Heart right ventricle (tissue), 16 donors: ENCODE measurements at regions of chr19 and their contacts with region 1.

Region 1: GRCh38 chr19:49157445-49158224 is at the start of gene TRPM4:
- DNase-seq: peak; percentile 96 to 97
- ATAC-seq: peak; percentile 81 to 86 (median 84)
- H3K4me3 ChIP-seq: peak within 1 kb of the TSS; percentile 75 to 98 (median 92)
- H3K27ac ChIP-seq: peak within 1 kb of the TSS; percentile 92 to 98 (median 96)
- H3K4me1 ChIP-seq: peaks cover 6 to 41% (median 24%) of the 10 kb centered on the region in 9 donors
- H3K27me3 ChIP-seq: peaks cover 0 to 16% (median 0%) of the 10 kb centered on the region in 7 donors
- CTCF ChIP-seq: peak in 1 of 9 donors; percentile 11
- total RNA-seq, gene TRPM4: 21.7 to 38.5 (median 33.0) TPM

Region 2: GRCh38 chr19:48637170-48637947 is 520.3 kb before region 1 on chr19 and contains the start of gene DBP:
- intact Hi-C with region 1: loop called in 1 of 10 experiments (anchors 5 kb)
- DNase-seq: peak; percentile 99 to 100
- ATAC-seq: peak; percentile 73 to 87 (median 82)
- H3K4me3 ChIP-seq: peak within 1 kb of the TSS; percentile 15 to 92 (median 75)
- H3K27ac ChIP-seq: peak within 1 kb of the TSS; percentile 90 to 98 (median 96)
- H3K4me1 ChIP-seq: peaks cover 19 to 56% (median 41%) of the 10 kb centered on the region in 9 donors
- H3K27me3 ChIP-seq: no peaks in the 10 kb centered on the region
- CTCF ChIP-seq: no peak
- total RNA-seq, gene DBP: 2.4 to 30.0 (median 12.8) TPM

Region 3: DNA sequence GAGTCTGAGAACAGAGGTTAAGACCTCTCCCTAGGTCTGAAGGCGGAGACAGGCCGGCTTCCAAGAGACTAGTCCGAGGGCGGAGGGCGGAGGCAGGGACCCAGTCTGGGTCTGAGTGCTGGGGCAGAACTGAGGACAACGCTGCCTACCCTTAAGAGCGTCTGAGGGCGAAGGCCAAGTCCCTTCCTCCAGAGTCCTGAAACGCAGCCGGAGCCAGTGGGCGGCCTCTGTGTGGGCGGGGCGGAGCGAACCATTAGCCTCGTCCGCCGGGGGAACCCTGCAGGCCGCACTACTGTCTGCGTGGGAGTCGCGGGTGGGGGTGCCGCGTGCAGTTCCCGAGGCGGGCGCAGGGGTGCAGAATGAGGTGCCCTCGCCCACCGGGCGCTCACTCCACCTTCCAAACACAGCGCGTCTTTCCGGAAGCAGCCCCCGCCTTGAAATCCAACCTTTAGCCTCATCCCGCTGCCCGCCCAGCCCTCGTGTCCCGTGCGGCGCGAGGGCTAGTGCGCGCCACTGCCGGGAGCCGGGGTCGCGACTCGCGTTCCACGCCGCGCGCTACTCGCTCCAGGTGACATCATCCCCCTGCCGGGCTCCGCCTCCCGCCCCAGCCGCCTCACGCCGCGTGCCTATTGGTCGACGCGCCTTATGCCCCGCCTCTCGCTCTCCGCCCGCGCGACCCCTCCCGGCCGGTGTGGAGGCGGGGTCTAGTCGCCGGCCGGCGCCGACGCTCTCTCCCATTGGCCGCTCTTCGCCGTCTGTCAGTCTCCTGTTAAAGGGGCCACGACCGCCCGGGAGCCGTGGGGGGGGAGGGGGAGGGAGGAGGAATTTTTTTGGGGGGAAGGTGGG is 38.8 kb before region 1 on chr19 and contains the start of gene C19orf73:
- intact Hi-C with region 1: loop called in 3 of 10 experiments (anchors 5 kb)
- DNase-seq: peak; percentile 94 to 97
- ATAC-seq: peak; percentile 89 to 95 (median 94)
- H3K4me3 ChIP-seq: peak within 1 kb of the TSS; percentile 41 to 85 (median 64)
- H3K27ac ChIP-seq: peak within 1 kb of the TSS; percentile 86 to 99 (median 97)
- H3K4me1 ChIP-seq: peaks cover 11 to 50% (median 35%) of the 10 kb centered on the region in 9 donors
- H3K27me3 ChIP-seq: peaks cover 0 to 19% (median 0%) of the 10 kb centered on the region in 7 donors
- CTCF ChIP-seq: peak in 4 of 9 donors; percentile 20 to 40 (median 27)
- total RNA-seq, gene C19orf73: 0.64 to 2.3 (median 1.0) TPM

Region 4: DNA sequence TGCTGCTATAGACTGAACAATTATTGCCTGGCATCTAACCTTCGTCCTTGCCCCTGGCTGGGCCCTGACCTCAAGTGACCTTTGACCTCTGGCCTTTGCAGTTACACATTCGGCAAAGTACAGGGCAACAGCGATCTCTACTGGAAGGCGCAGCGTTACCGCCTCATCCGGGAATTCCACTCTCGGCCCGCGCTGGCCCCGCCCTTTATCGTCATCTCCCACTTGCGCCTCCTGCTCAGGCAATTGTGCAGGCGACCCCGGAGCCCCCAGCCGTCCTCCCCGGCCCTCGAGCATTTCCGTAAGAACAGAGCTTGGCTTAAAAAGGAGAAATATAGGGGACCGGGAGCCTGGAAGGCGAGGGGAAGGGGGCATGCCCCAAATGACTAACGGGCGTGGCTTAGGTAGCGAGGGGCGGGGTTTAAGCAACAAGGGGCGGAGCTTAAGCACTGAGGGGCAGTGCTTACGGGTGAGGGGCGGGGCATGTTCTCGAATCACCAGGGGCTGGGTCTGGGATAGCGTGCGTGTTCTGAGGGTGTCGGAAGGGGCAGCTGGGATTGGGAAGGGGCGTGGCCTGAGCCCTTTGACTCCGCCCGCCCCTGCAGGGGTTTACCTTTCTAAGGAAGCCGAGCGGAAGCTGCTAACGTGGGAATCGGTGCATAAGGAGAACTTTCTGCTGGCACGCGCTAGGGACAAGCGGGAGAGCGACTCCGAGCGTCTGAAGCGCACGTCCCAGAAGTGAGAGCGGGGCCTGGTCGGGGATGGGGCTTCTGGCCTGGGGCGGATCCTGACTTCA is 52.7 kb after region 1 on chr19:
- intact Hi-C with region 1: no loop called
- DNase-seq: no peak
- ATAC-seq: peak in 4 of 8 donors; percentile 16 to 46 (median 40)
- H3K4me3 ChIP-seq: no peak overlapping the region
- H3K27ac ChIP-seq: peak overlapping the region in 1 of 10 donors; percentile 7
- H3K4me1 ChIP-seq: peaks cover 0 to 21% (median 11%) of the 10 kb centered on the region in 9 donors
- H3K27me3 ChIP-seq: no peaks in the 10 kb centered on the region
- CTCF ChIP-seq: no peak